Head of caudate nucleus (tissue), 42 donors: ENCODE measurements at regions of chr1 and their contacts with region 1.

Region 1: GRCh38 chr1:33086384-33086850 is 5.5 kb downstream of the AZIN2 start:
- DNase-seq: peak; percentile 62 to 94 (median 85)

Region 2: GRCh38 chr1:32933742-32934322 is 152.6 kb before region 1 on chr1:
- intact Hi-C with region 1: loop called (anchors 5 kb)
- DNase-seq: no peak